Naive thymus-derived CD4-positive, alpha-beta T cell (primary cell): ENCODE measurements at regions of chr18 and their contacts with region 1.

Region 1: GRCh38 chr18:40676668-40677067 is 1278.4 kb upstream of the PIK3C3 start:
- DNase-seq: no peak
- ATAC-seq: no peak
- H3K4me3 ChIP-seq: no peak overlapping the region
- H3K4me3 Mint-ChIP-seq: no peak overlapping the region
- H3K27ac ChIP-seq: no peak overlapping the region
- H3K27ac Mint-ChIP-seq: no peak overlapping the region
- H3K4me1 ChIP-seq: no peaks in the 10 kb centered on the region
- H3K4me1 Mint-ChIP-seq: no peaks in the 10 kb centered on the region
- H3K27me3 ChIP-seq: no peaks in the 10 kb centered on the region
- H3K27me3 Mint-ChIP-seq: no peaks in the 10 kb centered on the region

Region 2: GRCh38 chr18:40413160-40413559 is 263.5 kb before region 1 on chr18:
- CTCF ChIA-PET with region 1: no interaction called
- POLR2A ChIA-PET with region 1: no interaction called
- intact Hi-C with region 1: no loop called
- DNase-seq: no peak
- ATAC-seq: no peak
- H3K4me3 ChIP-seq: no peak overlapping the region
- H3K4me3 Mint-ChIP-seq: no peak overlapping the region
- H3K27ac ChIP-seq: no peak overlapping the region
- H3K27ac Mint-ChIP-seq: no peak overlapping the region
- H3K4me1 ChIP-seq: no peaks in the 10 kb centered on the region
- H3K4me1 Mint-ChIP-seq: no peaks in the 10 kb centered on the region
- H3K27me3 ChIP-seq: no peaks in the 10 kb centered on the region
- H3K27me3 Mint-ChIP-seq: no peaks in the 10 kb centered on the region

Region 3: DNA sequence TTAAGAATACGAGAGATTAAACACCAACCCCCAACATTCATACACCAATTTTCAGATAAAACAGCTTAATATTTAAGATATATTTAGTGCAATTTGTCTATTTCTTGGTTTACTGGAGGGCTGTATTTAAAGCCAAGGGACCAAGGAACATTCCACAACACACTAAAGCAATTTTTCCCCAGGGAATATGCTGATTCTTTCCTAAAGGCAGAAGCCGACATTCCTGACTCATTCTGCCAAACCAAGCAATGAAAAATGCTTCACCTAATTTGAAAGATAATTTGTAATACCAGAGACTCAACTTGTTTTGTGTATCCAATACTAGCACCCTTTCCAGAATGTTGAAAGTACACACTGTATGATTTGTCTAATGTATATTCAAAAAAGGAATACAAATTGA is 10.7 kb after region 1 on chr18:
- CTCF ChIA-PET with region 1: interaction called, 3 read pairs
- POLR2A ChIA-PET with region 1: no interaction called
- intact Hi-C with region 1: loop called in 1 of 2 experiments (anchors 1 kb)
- DNase-seq: no peak
- ATAC-seq: no peak
- H3K4me3 ChIP-seq: no peak overlapping the region
- H3K4me3 Mint-ChIP-seq: no peak overlapping the region
- H3K27ac ChIP-seq: no peak overlapping the region
- H3K27ac Mint-ChIP-seq: no peak overlapping the region
- H3K4me1 ChIP-seq: no peaks in the 10 kb centered on the region
- H3K4me1 Mint-ChIP-seq: no peaks in the 10 kb centered on the region
- H3K27me3 ChIP-seq: no peaks in the 10 kb centered on the region
- H3K27me3 Mint-ChIP-seq: no peaks in the 10 kb centered on the region

Region 4: DNA sequence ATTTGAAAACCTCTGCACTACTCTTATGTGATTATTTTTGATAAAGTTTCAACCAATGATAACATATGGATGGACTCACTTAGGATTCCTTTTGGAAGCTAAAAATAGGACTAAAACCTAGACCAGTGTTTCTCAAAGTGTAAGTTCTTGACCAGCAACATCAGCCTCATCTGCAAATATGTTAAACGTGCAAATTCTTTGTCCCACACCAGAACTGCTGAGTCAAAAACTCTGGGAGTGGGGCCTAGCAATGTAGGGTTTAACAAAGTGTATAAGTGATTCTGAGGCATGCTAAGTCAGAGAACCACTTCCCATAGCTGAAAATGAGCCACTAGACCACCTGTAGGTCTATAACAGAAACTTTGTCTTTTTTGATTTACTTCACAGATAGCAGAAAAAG is 31.1 kb after region 1 on chr18:
- CTCF ChIA-PET with region 1: no interaction called
- POLR2A ChIA-PET with region 1: no interaction called
- intact Hi-C with region 1: no loop called
- DNase-seq: no peak
- ATAC-seq: no peak
- H3K4me3 ChIP-seq: no peak overlapping the region
- H3K4me3 Mint-ChIP-seq: no peak overlapping the region
- H3K27ac ChIP-seq: no peak overlapping the region
- H3K27ac Mint-ChIP-seq: no peak overlapping the region
- H3K4me1 ChIP-seq: no peaks in the 10 kb centered on the region
- H3K4me1 Mint-ChIP-seq: no peaks in the 10 kb centered on the region
- H3K27me3 ChIP-seq: no peaks in the 10 kb centered on the region
- H3K27me3 Mint-ChIP-seq: no peaks in the 10 kb centered on the region